Head of caudate nucleus (tissue), 42 donors: ENCODE measurements at regions of chr2 and their contacts with region 1.

Region 1: GRCh38 chr2:64767670-64768468 is 114.2 kb upstream of the SERTAD2 start:
- DNase-seq: peak; percentile 77 to 96 (median 89)

Region 2: DNA sequence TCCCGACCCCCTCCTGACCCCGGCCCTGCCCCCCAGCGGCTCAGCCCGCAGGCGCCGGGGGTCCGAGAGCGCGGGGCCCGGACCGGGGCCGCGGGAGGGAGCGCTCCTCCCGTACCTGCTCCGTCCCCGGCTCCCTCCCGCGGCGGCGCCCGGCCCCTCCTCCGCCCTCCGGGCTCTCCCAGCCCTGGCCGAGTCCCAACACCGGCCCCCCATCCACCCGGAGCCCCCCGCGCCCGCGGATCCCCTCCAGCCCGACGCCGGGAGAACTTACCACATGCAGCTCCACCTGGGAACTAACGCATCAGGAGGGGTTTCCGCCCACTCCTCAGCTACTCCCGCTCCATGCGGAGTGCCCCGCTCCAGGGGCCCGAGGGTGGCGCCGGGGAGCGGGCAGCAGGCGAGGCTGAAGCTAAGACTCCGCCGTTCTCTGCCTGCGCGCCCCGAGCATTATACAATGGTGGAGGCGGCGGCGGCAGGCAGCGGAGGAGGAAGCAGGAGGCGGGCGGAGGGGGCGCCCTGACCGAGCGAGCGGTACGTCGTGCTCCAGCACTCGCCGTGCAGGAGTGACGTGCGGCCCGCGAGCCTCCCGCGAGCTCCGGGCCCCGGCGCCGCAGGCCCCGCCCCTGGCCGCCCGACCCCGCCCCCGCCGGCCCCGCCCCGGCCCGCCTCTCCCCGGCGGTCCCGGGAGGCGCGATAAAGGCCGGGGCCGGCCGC is 114.4 kb before region 1 on chr2 and contains the start of gene SERTAD2:
- intact Hi-C with region 1: loop called (anchors 5 kb)
- DNase-seq: peak; percentile 57 to 93 (median 86)

Region 3: GRCh38 chr2:64750817-64751285 is 17.0 kb before region 1 on chr2:
- intact Hi-C with region 1: loop called (anchors 1 kb)
- DNase-seq: peak in 41 of 42 donors; percentile 96 to 100 (median 99)

Region 4: GRCh38 chr2:64831134-64831976 is 63.5 kb after region 1 on chr2:
- intact Hi-C with region 1: loop called (anchors 10 kb)
- DNase-seq: peak; percentile 47 to 94 (median 81)

Region 5: DNA sequence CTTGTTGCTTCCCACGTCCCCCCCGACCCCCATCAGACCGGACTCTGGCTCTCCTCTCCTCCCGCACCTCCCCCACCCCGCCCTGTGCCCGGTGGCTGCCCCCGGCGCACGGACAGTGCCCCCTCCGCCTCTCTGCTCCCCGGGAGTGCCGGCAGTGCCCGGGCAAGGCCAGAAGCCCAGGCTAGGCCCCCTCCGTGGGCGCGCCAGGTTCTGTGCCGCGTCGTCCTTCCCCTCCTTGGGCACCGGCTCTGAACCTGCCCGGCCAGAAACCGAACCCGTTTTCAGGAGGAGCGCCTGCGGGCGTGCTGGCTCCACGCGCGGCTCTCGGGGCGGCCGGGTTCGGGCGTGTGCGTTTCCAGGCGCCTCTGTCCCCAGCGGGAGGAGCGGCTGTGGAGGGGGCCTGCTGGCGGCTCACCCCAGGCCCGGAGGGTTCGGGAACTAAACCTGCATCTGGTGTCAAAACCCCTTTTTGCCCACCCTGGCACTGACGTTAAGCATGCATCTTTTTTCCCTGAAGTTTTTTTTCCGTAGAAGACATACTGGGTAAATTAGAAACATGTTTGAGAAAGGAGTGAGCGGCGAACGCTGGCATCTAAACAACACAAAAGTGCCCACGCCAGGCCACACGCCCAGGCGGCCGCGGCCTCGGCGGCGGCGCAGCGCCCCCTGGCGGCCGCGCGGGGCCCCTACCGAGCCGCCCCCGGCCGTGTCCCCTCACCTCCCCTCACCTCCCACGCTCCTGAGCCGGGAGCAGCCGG is 97.4 kb after region 1 on chr2:
- intact Hi-C with region 1: loop called (anchors 5 kb)
- DNase-seq: peak; percentile 42 to 87 (median 72)

Region 6: GRCh38 chr2:64972876-64973275 is 205.0 kb after region 1 on chr2:
- intact Hi-C with region 1: no loop called
- DNase-seq: no peak